OCI-LY7 (cell line): ENCODE measurements at regions of chr12 and their contacts with region 1.

Region 1: GRCh38 chr12:92226071-92226661 is 80.5 kb upstream of the BTG1 start:
- DNase-seq: no peak
- H3K4me3 ChIP-seq: no peak overlapping the region
- H3K27ac ChIP-seq: no peak overlapping the region
- H3K4me1 ChIP-seq: no peaks in the 10 kb centered on the region
- CTCF ChIP-seq: no peak

Region 2: DNA sequence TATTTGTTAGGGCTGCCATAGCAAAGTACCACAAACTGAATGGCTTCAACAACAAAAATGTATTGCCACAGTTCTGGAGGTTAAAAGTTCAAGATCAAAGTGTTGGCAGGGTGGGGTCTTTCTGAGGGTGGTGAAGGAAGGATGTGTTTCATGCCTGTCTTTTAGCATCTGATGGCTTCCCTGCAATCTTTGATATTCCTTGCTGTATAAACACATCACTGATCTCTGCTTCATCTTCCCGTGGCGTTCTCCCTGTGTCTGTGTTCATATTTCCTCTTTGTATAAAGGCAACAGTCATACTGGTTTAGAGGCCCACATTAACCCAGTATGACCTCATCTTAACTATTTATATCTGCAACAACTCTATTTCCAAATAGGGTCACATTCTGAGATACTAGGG is 248.0 kb before region 1 on chr12:
- CTCF ChIA-PET with region 1: no interaction called
- POLR2A ChIA-PET with region 1: interaction called, 13 read pairs
- intact Hi-C with region 1: no loop called
- DNase-seq: no peak
- H3K4me3 ChIP-seq: no peak overlapping the region
- H3K27ac ChIP-seq: no peak overlapping the region
- H3K4me1 ChIP-seq: no peaks in the 10 kb centered on the region
- CTCF ChIP-seq: no peak